ENCODE measurements at regions of chr11 and their contacts with region 1.

Region 1: DNA sequence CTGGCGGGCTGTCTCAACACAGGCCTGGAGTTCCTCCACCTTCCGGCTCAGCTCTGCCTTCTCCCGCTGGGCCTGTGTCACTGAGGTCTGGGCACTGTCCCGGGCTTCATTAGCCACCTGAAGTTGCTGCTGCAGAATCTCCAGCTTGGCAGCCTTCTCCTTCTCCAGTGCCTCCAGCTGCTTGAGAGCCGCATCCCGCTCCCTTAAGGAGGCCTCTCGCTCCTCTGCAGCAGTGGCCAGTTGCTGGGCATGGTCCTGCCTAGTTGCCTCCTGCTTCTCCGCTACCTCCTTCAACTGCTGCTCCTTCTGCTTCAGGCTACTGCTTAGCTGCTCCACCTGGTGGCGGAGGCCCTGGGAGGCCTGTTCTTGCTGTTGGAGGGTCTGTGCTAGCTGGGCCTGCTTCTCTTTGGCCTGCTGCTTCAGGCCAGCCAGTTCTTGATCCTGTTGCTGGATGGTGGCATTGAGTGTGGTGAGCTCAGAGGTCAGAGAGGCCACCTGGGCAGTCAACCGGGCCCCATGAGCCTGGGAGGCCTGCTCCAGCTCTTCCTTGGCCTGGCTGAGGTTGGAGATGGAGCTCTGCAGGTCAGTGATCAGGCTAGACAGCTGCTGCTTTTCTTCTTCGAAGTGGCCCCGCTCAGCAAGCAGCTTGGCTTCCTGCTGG is 16.9 kb downstream of the IL18BP start:
- DNase-seq: no peak
- H3K4me3 ChIP-seq: no peak overlapping the region
- H3K27me3 ChIP-seq: no peaks in the 10 kb centered on the region
- CTCF ChIP-seq: peak; percentile 55

Region 2: GRCh38 chr11:71962428-71963038 is 53.1 kb before region 1 on chr11:
- CTCF ChIA-PET with region 1: no interaction called
- POLR2A ChIA-PET with region 1: no interaction called
- DNase-seq: no peak
- H3K4me3 ChIP-seq: no peak overlapping the region
- H3K27me3 ChIP-seq: no peaks in the 10 kb centered on the region
- CTCF ChIP-seq: no peak

Region 3: GRCh38 chr11:71991494-71991893 is 24.1 kb before region 1 on chr11:
- CTCF ChIA-PET with region 1: interaction called, 10 read pairs
- POLR2A ChIA-PET with region 1: no interaction called
- DNase-seq: no peak
- H3K4me3 ChIP-seq: no peak overlapping the region
- H3K27me3 ChIP-seq: no peaks in the 10 kb centered on the region
- CTCF ChIP-seq: no peak

Region 4: GRCh38 chr11:72004936-72005500 is 10.6 kb before region 1 on chr11:
- CTCF ChIA-PET with region 1: interaction called, 19 read pairs
- POLR2A ChIA-PET with region 1: no interaction called
- DNase-seq: no peak
- H3K4me3 ChIP-seq: no peak overlapping the region
- H3K27me3 ChIP-seq: no peaks in the 10 kb centered on the region
- CTCF ChIP-seq: no peak

Region 5: DNA sequence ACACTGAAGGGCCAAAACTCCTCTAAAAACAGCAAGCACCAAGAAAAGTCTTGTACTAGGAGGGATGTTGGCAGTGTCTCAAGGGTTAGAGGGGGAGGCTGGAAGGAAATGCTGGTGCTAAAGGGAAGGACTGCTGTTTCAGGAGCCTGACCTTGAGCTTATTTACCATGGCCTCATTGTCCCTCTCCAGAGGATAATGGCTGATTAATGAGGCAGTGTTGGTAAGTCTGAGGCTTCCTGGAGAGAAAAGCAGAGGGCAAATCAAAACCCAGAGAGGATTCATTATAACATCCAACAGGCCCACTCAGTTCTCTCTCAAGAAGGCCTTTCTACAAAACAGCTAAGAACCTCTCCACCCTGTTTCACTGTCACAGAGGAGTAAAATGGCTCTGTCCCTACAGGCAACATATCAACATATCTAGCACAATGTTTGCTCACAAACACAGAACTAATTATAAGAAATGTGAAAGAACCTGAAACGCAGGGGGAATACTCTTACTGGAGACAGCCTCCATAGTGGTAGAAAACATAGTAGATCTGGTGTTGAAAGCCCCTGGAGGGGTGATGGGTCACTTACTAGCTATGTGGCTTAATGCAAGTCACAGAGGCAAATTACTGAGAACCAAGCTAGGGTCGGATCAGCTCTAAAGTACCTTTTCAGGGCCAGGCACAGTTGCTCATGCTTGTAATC is 33.3 kb after region 1 on chr11:
- CTCF ChIA-PET with region 1: no interaction called
- POLR2A ChIA-PET with region 1: interaction called, 16 read pairs
- DNase-seq: no peak
- H3K4me3 ChIP-seq: no peak overlapping the region
- H3K27me3 ChIP-seq: no peaks in the 10 kb centered on the region
- CTCF ChIP-seq: no peak

Region 6: GRCh38 chr11:72189461-72190275 is 174.0 kb after region 1 on chr11:
- CTCF ChIA-PET with region 1: interaction called, 79 read pairs
- POLR2A ChIA-PET with region 1: no interaction called
- DNase-seq: no peak
- H3K4me3 ChIP-seq: no peak overlapping the region
- H3K27me3 ChIP-seq: no peaks in the 10 kb centered on the region
- CTCF ChIP-seq: no peak